SK-N-SH (cell line): ENCODE measurements at regions of chr10 and their contacts with region 1.

Region 1: DNA sequence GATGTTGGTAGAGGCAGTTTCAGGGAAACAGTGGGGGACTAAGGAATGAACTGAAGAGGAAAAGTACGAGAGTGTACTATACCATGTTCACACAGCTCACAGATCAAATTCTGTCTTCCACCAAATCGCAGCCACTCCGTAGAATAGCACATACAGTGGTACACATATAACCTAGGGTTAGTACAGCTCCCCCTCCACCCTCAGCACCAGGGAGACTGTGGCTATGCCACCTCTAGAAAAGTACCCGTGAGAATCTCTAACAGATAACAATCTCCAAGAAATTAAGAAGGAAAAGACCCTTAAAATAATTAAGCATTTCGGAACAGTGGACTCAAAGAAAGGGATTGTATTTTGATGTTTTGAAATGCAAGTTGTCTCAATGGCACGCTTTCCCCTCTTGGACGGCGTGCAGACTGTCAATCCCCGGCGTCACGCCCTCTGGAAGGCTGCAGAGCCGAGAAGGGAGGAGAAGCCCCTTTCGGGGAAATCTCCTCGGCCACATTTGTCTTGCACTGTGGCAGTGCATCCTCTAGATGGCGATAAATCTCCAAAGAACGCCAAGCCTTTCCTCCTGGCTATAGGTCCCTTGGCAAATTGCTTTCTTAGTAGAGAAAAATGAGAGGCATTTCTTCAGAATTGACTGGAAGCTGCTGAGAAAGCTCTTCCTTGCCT is 345.0 kb downstream of the REEP3 start:
- DNase-seq: peak; percentile 74
- H3K4me3 ChIP-seq: peak overlapping the region in 1 of 2 experiments; percentile 36; a peak in 1 of 4 replicates
- H3K27ac ChIP-seq: no peak overlapping the region
- H3K4me1 ChIP-seq: peaks cover 0 to 8% of the 10 kb centered on the region in 2 experiments; a peak in 1 of 4 replicates
- H3K27me3 ChIP-seq: peaks cover 4% of the 10 kb centered on the region; the same call in 1 of the 2 replicates
- CTCF ChIP-seq: peak; percentile 83
- EP300 ChIP-seq: no peak
- RAD21 ChIP-seq: peak; percentile 80

Region 2: DNA sequence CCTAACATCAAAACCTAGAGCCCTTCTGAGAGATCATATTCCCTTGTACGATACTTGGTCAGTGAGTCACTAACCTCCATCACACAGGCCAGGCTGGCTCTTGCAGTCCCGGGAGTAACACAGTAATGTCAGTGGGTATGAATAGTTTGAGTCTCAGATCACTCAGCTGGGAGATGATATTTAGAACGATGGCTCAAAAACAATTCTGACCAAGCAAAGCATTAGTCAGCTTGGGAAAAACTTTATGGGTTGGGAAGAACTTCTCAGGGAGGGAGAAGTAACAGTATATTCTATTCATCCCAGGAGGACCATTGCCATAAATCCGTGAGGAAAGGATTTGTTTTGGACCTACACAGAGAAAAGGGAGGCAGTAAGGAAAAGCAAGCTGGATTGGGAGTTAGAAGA is 166.0 kb before region 1 on chr10:
- CTCF ChIA-PET with region 1: no interaction called
- POLR2A ChIA-PET with region 1: no interaction called
- DNase-seq: no peak
- H3K4me3 ChIP-seq: peak overlapping the region in 1 of 2 experiments; percentile 8; a peak in 2 of 4 replicates
- H3K27ac ChIP-seq: peak overlapping the region; percentile 95 to 99
- H3K4me1 ChIP-seq: peaks cover 22 to 61% of the 10 kb centered on the region in 2 experiments
- H3K27me3 ChIP-seq: no peaks in the 10 kb centered on the region
- CTCF ChIP-seq: no peak
- EP300 ChIP-seq: peak in 1 of 2 experiments; percentile 84; a peak in 2 of 4 replicates
- RAD21 ChIP-seq: no peak

Region 3: DNA sequence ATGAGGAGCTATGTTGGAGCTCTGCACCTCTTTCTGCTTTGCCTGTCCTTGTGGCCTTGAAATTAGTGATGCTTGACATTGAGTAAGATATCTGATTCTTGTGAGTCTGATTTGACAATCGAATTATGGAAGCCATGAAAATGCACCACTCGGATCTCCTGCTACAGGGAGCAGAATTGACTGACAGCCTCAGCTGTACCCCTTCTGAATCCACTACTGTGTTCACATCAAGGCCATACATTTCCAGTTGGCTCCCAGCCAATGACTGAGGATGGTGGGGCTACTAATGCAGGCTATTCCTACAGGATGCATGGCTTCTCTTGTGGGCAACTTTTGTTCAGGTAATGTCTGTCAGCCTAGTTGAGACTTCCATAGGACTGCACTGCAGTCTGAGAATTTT is 23.1 kb before region 1 on chr10:
- CTCF ChIA-PET with region 1: interaction called, 11 read pairs
- POLR2A ChIA-PET with region 1: no interaction called
- DNase-seq: no peak
- H3K4me3 ChIP-seq: no peak overlapping the region
- H3K27ac ChIP-seq: no peak overlapping the region
- H3K4me1 ChIP-seq: no peaks in the 10 kb centered on the region; a peak in 2 of 4 replicates
- H3K27me3 ChIP-seq: no peaks in the 10 kb centered on the region; the same call in 1 of the 2 replicates
- CTCF ChIP-seq: no peak
- EP300 ChIP-seq: no peak
- RAD21 ChIP-seq: no peak

Region 4: GRCh38 chr10:63878428-63878827 is 12.2 kb after region 1 on chr10:
- CTCF ChIA-PET with region 1: interaction called, 13 read pairs
- POLR2A ChIA-PET with region 1: no interaction called
- DNase-seq: no peak
- H3K4me3 ChIP-seq: no peak overlapping the region
- H3K27ac ChIP-seq: no peak overlapping the region
- H3K4me1 ChIP-seq: no peaks in the 10 kb centered on the region
- H3K27me3 ChIP-seq: no peaks in the 10 kb centered on the region
- CTCF ChIP-seq: no peak
- EP300 ChIP-seq: no peak
- RAD21 ChIP-seq: no peak

Region 5: GRCh38 chr10:63887023-63887589 is 20.9 kb after region 1 on chr10:
- CTCF ChIA-PET with region 1: interaction called, 12 read pairs
- POLR2A ChIA-PET with region 1: no interaction called
- DNase-seq: no peak
- H3K4me3 ChIP-seq: no peak overlapping the region
- H3K27ac ChIP-seq: no peak overlapping the region
- H3K4me1 ChIP-seq: no peaks in the 10 kb centered on the region
- H3K27me3 ChIP-seq: no peaks in the 10 kb centered on the region
- CTCF ChIP-seq: no peak; the same call in 1 of the 2 replicates
- EP300 ChIP-seq: no peak
- RAD21 ChIP-seq: no peak

Region 6: DNA sequence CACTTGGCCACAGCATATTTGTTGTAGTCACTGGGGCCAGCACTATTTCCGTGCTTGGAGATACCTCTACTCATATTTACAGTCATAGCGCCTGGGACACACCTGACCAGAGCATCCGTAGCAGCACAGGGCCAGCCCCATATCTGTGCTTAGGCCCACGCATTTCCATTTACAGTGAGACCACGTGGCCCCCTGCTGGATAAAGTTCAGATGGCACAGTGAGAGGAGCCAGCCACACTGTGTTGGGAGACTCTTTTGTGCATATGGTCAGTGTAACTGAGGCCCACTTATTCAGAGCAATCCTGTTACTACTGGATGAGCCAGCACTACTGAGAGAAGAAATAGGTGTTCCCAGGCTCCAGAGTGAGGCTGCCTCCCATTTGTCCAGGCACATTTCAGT is 110.3 kb after region 1 on chr10:
- CTCF ChIA-PET with region 1: interaction called, 117 read pairs
- POLR2A ChIA-PET with region 1: no interaction called
- DNase-seq: peak; percentile 68
- H3K4me3 ChIP-seq: no peak overlapping the region
- H3K27ac ChIP-seq: no peak overlapping the region
- H3K4me1 ChIP-seq: no peaks in the 10 kb centered on the region
- H3K27me3 ChIP-seq: no peaks in the 10 kb centered on the region
- CTCF ChIP-seq: peak; percentile 70
- EP300 ChIP-seq: no peak
- RAD21 ChIP-seq: peak; percentile 76

Region 7: GRCh38 chr10:64041185-64041988 is 175.2 kb after region 1 on chr10:
- CTCF ChIA-PET with region 1: interaction called, 17 read pairs
- POLR2A ChIA-PET with region 1: no interaction called
- DNase-seq: peak; percentile 65
- H3K4me3 ChIP-seq: peak overlapping the region in 1 of 2 experiments; percentile 56; a peak in 1 of 4 replicates
- H3K27ac ChIP-seq: no peak overlapping the region
- H3K4me1 ChIP-seq: peaks cover 0 to 2% of the 10 kb centered on the region in 2 experiments; a peak in 1 of 4 replicates
- H3K27me3 ChIP-seq: peaks cover 7% of the 10 kb centered on the region; the same call in 1 of the 2 replicates
- CTCF ChIP-seq: peak; percentile 99
- EP300 ChIP-seq: no peak
- RAD21 ChIP-seq: peak; percentile 100

Region 8: GRCh38 chr10:64091897-64092296 is 225.7 kb after region 1 on chr10:
- CTCF ChIA-PET with region 1: no interaction called
- POLR2A ChIA-PET with region 1: no interaction called
- DNase-seq: peak; percentile 21
- H3K4me3 ChIP-seq: no peak overlapping the region
- H3K27ac ChIP-seq: no peak overlapping the region
- H3K4me1 ChIP-seq: no peaks in the 10 kb centered on the region
- H3K27me3 ChIP-seq: no peaks in the 10 kb centered on the region
- CTCF ChIP-seq: peak; percentile 52
- EP300 ChIP-seq: no peak
- RAD21 ChIP-seq: peak; percentile 76